Heart left ventricle (tissue), 16 donors: ENCODE measurements at regions of chr7 and their contacts with region 1.

Region 1: DNA sequence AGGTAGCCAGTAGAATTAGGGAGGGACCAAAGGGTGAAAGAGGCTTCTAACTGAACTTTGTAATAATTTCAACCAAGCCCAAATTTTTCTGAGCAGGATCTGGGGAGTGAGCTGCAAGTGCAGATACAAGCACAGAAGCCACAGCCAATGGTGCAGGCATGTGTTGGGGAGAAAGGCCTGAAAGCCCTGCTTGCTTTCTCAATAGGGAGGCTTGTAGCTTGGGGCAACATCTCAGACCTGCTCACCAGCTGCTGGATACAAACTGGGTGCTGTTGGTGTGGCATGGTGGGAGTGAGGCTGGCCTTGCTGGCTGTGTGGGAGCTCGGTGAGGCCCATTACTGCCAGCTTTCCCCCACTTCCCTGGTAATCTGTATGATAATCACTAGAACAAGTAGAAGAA is 688.5 kb upstream of the SEMA3D start:
- DNase-seq: no peak
- ATAC-seq: no peak
- H3K4me3 ChIP-seq: no peak overlapping the region
- H3K27ac ChIP-seq: no peak overlapping the region
- H3K4me1 ChIP-seq: no peaks in the 10 kb centered on the region
- H3K27me3 ChIP-seq: no peaks in the 10 kb centered on the region
- CTCF ChIP-seq: no peak
- POLR2A ChIP-seq: no peak

Region 2: DNA sequence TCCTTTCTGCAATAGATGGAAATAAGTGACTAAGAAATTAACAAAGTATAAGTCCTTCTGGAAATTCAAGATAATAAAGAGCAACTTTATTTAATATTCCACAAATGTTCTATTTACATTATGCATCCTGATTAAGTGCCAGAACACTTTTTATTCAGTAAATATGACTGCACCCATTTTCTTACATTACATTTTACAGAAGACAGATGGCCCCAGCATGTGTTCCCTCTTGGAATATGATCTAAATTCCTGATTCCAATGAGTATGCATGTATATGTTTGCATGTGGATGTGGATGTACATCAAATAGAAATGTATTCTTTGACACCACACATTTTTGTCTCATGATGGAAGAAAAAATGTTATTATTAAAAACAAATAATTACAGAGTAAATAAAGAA is 59.9 kb before region 1 on chr7:
- intact Hi-C with region 1: loop called in 1 of 10 experiments (anchors 10 kb)
- DNase-seq: no peak
- ATAC-seq: no peak
- H3K4me3 ChIP-seq: no peak overlapping the region
- H3K27ac ChIP-seq: no peak overlapping the region
- H3K4me1 ChIP-seq: no peaks in the 10 kb centered on the region
- H3K27me3 ChIP-seq: no peaks in the 10 kb centered on the region
- CTCF ChIP-seq: no peak
- POLR2A ChIP-seq: no peak

Region 3: GRCh38 chr7:85974176-85974575 is 98.8 kb after region 1 on chr7:
- intact Hi-C with region 1: no loop called
- DNase-seq: no peak
- ATAC-seq: no peak
- H3K4me3 ChIP-seq: no peak overlapping the region
- H3K27ac ChIP-seq: no peak overlapping the region
- H3K4me1 ChIP-seq: no peaks in the 10 kb centered on the region
- H3K27me3 ChIP-seq: no peaks in the 10 kb centered on the region
- CTCF ChIP-seq: no peak
- POLR2A ChIP-seq: no peak